ENCODE measurements at regions of chr19 and their contacts with region 1.

Region 1: DNA sequence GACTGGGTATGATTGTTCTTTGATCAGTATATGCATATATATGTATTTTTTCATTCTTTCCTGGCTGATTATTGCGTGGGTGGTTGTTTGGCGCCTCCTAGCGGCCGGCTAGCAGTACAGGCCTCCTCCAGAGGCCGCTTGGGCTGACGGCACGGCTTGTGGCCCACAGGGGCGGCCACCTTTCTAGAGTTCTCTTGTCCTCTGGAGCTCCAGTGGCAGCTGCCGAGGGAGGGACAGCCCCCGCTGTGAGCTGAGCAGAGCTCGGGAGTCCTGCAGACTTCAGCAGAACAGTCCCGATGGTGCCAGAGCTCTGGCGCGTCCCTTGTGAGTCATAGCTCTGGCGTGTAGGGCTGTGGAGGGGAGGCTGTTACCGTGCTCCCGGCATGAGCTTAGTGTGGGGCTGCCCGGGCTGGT is 22.5 kb upstream of the ZNF429 start:
- DNase-seq: peak; percentile 21 to 75 (median 56)
- H3K4me3 ChIP-seq: no peak overlapping the region
- H3K4me3 Mint-ChIP-seq: no peak overlapping the region
- H3K27ac ChIP-seq: no peak overlapping the region
- H3K27ac Mint-ChIP-seq: peak overlapping the region in 1 of 8 donors; percentile 11
- H3K4me1 ChIP-seq: no peaks in the 10 kb centered on the region
- H3K4me1 Mint-ChIP-seq: peaks cover 0 to 1% (median 0%) of the 10 kb centered on the region in 3 donors
- H3K27me3 ChIP-seq: no peaks in the 10 kb centered on the region
- H3K27me3 Mint-ChIP-seq: peaks cover 0 to 2% of the 10 kb centered on the region in 2 donors

Region 2: DNA sequence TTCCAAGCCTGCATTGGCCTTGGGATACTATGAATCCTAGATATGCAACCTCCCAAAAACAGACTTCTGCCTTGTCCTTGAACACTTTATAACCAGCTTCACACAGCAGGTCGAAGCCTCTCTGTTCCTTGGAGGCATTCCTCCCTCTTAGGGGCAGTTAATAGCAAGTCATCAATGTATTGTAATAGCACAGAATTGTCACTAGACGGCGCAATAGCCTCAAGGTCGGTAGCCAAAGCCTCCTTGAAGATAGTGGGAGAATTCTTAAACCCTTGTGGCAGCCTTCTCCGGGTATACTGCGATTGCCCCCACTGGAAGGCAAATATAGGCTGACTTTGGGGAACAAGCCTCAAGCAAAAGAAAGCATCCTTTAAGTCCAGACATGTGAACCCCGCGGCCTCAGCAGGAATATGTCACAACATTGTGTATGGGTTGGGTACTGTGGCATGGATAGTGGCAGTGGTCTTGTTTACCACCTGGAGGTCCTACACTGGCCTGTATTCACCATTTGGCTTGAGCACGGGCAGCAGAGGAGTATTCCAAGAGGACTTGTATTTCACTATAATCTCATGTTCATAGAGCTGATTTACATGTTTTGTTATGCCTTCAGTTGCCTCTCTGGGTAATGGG is 279.9 kb before region 1 on chr19:
- CTCF ChIA-PET with region 1: interaction called, 12 read pairs
- POLR2A ChIA-PET with region 1: no interaction called
- DNase-seq: peak in 3 of 5 donors; percentile 2 to 25 (median 5)
- H3K4me3 ChIP-seq: no peak overlapping the region
- H3K4me3 Mint-ChIP-seq: no peak overlapping the region
- H3K27ac ChIP-seq: no peak overlapping the region
- H3K27ac Mint-ChIP-seq: no peak overlapping the region
- H3K4me1 ChIP-seq: no peaks in the 10 kb centered on the region
- H3K4me1 Mint-ChIP-seq: no peaks in the 10 kb centered on the region
- H3K27me3 ChIP-seq: no peaks in the 10 kb centered on the region
- H3K27me3 Mint-ChIP-seq: peaks cover 2 to 21% of the 10 kb centered on the region in 2 donors

Measured in CD8-positive, alpha-beta memory T cell (primary cell).